Lower leg skin (tissue), 4 donors: ENCODE measurements at regions of chr20 and their contacts with region 1.

Region 1: DNA sequence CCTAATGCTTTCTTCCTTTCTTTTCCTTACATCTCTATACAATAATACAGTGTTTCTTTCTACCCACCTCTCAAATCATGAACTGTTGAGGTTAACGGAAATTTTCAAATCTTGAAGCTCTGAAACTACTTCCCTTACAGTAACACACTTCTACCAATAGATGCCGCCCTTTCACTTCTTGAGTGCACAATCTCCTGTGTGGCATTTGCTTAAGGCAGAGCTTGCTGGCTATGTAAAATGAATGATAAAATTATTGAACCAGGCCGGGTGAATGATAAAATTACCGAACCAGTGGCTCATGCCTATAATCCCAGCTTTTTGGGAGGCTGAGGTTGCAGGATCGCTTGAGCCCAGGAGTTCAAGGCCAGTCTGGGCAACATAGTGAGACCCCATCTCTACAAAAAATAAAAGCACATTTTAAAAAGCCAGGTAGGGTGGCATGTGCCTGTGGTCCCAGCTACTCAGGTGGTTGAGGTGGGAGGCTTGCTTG is 56.8 kb downstream of the KCNS1 start:
- DNase-seq: no peak
- H3K4me3 ChIP-seq: no peak overlapping the region
- CTCF ChIP-seq: peak in 1 of 3 donors; percentile 74
- POLR2A ChIP-seq: no peak

Region 2: DNA sequence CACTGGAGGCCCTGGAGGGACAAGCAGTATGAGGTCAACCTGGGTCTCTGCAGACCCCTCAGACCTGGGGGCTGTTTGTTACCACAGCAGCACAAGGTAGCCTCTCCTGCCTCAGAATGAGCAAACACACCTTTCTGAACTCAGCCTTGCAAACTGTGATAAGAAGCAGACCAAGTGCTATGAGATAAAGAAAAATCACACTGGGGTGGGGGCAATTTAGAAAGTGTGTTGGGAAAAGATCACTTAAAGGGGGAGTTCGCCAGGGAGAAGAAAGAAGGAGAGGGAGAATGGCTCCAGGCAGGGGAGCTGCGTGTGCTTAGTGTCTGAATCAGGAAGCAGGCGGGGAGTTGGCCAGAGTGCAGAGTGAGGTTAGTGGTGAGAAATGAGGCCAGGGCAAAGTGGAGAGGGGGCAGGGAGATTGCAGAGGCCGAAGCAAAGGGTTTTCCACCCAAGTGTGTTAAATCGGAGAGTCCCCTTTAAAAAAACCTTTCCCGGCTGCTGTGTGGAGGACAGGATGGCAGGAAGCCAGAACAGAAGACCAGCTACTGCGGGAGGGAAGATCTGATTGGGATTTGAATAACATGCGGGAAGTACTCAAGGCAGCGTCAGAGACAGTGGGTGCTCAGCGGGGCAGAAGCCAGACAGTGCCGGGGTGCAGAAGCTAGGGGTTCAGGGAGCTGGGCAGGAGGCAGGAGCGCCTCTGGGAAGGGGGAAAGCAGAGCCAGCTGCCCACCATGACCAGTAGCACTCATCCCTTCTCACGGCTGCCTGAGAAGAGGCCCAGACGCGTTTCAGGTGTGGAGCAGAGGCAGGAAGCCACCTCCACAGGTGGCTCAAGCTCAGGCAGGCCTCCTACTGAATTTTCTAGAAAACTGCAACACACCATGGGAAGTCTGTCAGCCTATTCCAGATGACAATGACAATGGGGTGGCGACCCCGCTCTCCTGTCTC is 401.7 kb before region 1 on chr20:
- intact Hi-C with region 1: no loop called
- DNase-seq: peak; percentile 46 to 92
- H3K4me3 ChIP-seq: no peak overlapping the region
- CTCF ChIP-seq: no peak
- POLR2A ChIP-seq: no peak

Region 3: GRCh38 chr20:45011108-45011526 is 33.0 kb before region 1 on chr20:
- intact Hi-C with region 1: loop called (anchors 1 kb)
- DNase-seq: peak in 1 of 2 donors; percentile 65
- H3K4me3 ChIP-seq: no peak overlapping the region
- CTCF ChIP-seq: peak in 1 of 3 donors; percentile 13
- POLR2A ChIP-seq: no peak

Region 4: GRCh38 chr20:45095753-45096371 is 51.7 kb after region 1 on chr20:
- intact Hi-C with region 1: loop called (anchors 10 kb)
- DNase-seq: peak in 1 of 2 donors; percentile 47
- H3K4me3 ChIP-seq: no peak overlapping the region
- CTCF ChIP-seq: no peak
- POLR2A ChIP-seq: no peak

Region 5: DNA sequence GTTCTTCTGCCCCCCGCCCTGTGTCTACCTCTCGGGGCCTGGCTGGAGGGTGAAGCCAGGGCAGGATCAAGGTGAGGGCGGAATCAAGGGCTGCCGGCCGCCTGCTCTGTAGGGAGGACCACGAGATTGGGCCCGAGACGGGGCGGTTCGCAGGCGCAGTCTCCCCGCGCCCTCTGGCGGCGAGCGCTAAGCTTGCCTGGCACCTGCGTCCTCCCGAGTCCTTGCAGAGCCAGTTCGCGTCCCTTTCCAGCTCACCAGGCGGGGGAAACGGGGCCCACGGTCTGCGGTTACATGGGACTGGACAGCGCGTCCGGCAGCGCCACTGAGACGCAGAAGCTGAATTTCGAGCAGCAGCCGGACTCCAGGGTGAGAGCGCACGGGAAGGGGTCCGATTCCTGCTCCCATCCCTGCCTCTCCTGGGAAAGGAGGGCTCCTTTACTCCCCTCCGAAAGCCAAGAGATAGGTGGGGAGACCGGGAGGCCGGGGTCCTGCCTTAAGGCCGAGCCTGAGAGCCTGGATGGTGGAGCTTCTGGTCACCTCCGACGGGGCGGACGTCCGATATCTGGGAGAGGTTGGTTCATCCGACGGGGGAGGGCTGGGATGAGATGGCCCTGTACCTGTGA is 267.6 kb after region 1 on chr20:
- intact Hi-C with region 1: loop called (anchors 5 kb)
- DNase-seq: peak in 1 of 2 donors; percentile 92
- H3K4me3 ChIP-seq: no peak overlapping the region
- CTCF ChIP-seq: peak in 1 of 3 donors; percentile 34
- POLR2A ChIP-seq: no peak